ENCODE measurements at regions of chr11 and their contacts with region 1.

Region 1: DNA sequence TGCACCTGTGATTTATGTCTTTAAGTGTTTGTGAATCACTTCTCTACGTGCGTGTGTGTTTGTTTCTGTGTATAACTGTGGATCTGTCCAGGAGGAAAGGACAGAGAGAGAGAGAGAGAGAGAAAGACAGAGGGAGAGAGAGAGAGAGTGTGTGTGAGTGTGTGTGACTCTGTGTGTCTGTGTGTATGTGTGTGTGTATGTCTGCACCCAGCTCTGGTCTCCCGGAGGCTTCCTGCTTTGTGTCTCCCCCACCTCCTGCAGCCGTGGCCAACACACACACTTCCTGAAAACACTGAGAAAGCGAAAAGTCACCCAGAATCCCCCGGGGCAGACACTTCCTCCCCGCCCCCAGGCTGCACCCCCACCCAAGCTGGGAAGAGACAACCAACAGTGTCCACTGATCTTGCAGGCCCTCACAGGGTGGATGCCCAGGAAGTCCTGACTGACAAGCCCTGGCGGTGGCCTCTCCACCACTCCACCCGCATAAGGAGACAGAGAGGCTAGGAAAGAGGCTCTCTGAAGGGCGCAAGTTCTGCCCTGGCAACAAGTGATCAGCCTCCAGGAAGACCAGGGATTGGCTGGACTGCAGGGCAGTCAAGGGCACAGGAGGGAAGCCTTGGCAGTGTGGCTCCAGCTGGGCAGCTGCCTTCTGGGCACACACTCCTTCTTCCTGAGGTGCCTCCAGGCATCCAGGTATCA is 30.0 kb downstream of the ARAP1 start:
- DNase-seq: peak; percentile 78 to 88 (median 80)
- ATAC-seq: peak; percentile 92
- H3K4me3 ChIP-seq: peak overlapping the region; percentile 33
- H3K27ac ChIP-seq: peak overlapping the region; percentile 79
- H3K4me1 ChIP-seq: peaks cover 11 to 29% of the 10 kb centered on the region in 2 experiments; a peak in 4 of 5 replicates
- H3K27me3 ChIP-seq: no peaks in the 10 kb centered on the region
- CTCF ChIP-seq: no peak
- EP300 ChIP-seq: no peak
- POLR2A ChIP-seq: peak; percentile 68
- RAD21 ChIP-seq: no peak

Region 2: GRCh38 chr11:72598906-72599305 is 123.3 kb before region 1 on chr11:
- CTCF ChIA-PET with region 1: no interaction called
- POLR2A ChIA-PET with region 1: no interaction called
- in situ Hi-C with region 1: no loop called
- intact Hi-C with region 1: no loop called
- DNase-seq: peak; percentile 54 to 70 (median 60)
- ATAC-seq: peak; percentile 89
- H3K4me3 ChIP-seq: no peak overlapping the region
- H3K27ac ChIP-seq: no peak overlapping the region
- H3K4me1 ChIP-seq: no peaks in the 10 kb centered on the region
- H3K27me3 ChIP-seq: peaks cover 13 to 68% of the 10 kb centered on the region in 2 experiments; a peak in 4 of 5 replicates
- CTCF ChIP-seq: peak; percentile 62 to 70 (median 68)
- EP300 ChIP-seq: no peak
- POLR2A ChIP-seq: no peak
- RAD21 ChIP-seq: peak; percentile 41 to 76

Region 3: GRCh38 chr11:72625691-72626413 is 96.3 kb before region 1 on chr11:
- CTCF ChIA-PET with region 1: no interaction called
- POLR2A ChIA-PET with region 1: no interaction called
- in situ Hi-C with region 1: no loop called
- intact Hi-C with region 1: no loop called
- DNase-seq: peak; percentile 33 to 44 (median 40)
- ATAC-seq: peak; percentile 72
- H3K4me3 ChIP-seq: no peak overlapping the region
- H3K27ac ChIP-seq: no peak overlapping the region
- H3K4me1 ChIP-seq: peaks cover 18 to 21% of the 10 kb centered on the region in 2 experiments; a peak in 4 of 5 replicates
- H3K27me3 ChIP-seq: peaks cover 2 to 18% of the 10 kb centered on the region in 2 experiments; a peak in 4 of 5 replicates
- CTCF ChIP-seq: no peak
- EP300 ChIP-seq: no peak
- POLR2A ChIP-seq: no peak
- RAD21 ChIP-seq: no peak

Region 4: GRCh38 chr11:72676861-72677341 is 45.3 kb before region 1 on chr11:
- CTCF ChIA-PET with region 1: no interaction called
- POLR2A ChIA-PET with region 1: no interaction called
- in situ Hi-C with region 1: no loop called
- intact Hi-C with region 1: no loop called
- DNase-seq: peak; percentile 73 to 96 (median 90)
- ATAC-seq: peak; percentile 95
- H3K4me3 ChIP-seq: no peak overlapping the region
- H3K27ac ChIP-seq: no peak overlapping the region
- H3K4me1 ChIP-seq: peaks cover 0 to 20% of the 10 kb centered on the region in 2 experiments; a peak in 2 of 5 replicates
- H3K27me3 ChIP-seq: peaks cover 7 to 67% of the 10 kb centered on the region in 2 experiments; a peak in 4 of 5 replicates
- CTCF ChIP-seq: no peak
- EP300 ChIP-seq: no peak
- POLR2A ChIP-seq: no peak
- RAD21 ChIP-seq: no peak

Region 5: GRCh38 chr11:72752088-72752914 is 30.1 kb after region 1 on chr11 and contains the start of gene ARAP1:
- CTCF ChIA-PET with region 1: no interaction called
- POLR2A ChIA-PET with region 1: no interaction called
- in situ Hi-C with region 1: no loop called
- intact Hi-C with region 1: loop called (anchors 1 kb)
- DNase-seq: peak; percentile 85 to 98 (median 97)
- ATAC-seq: peak; percentile 91
- H3K4me3 ChIP-seq: peak within 1 kb of the TSS; percentile 97
- H3K27ac ChIP-seq: peak within 1 kb of the TSS; percentile 83
- H3K4me1 ChIP-seq: peaks cover 26 to 65% of the 10 kb centered on the region in 2 experiments
- H3K27me3 ChIP-seq: no peaks in the 10 kb centered on the region
- CTCF ChIP-seq: 0 out of 6 replicates have a peak, but pooled peaks of 2 of the 3 experiments have one; percentile 10 to 17
- EP300 ChIP-seq: no peak
- POLR2A ChIP-seq: peak; percentile 70
- RAD21 ChIP-seq: 0 out of 4 replicates have a peak, but pooled peaks of 1 of the 2 experiments have one; percentile 2
- polyA plus RNA-seq, gene ARAP1: 0.23 to 0.38 TPM

Region 6: GRCh38 chr11:72762641-72763304 is 40.6 kb after region 1 on chr11:
- CTCF ChIA-PET with region 1: no interaction called
- POLR2A ChIA-PET with region 1: no interaction called
- in situ Hi-C with region 1: no loop called
- intact Hi-C with region 1: no loop called
- DNase-seq: no peak
- ATAC-seq: no peak
- H3K4me3 ChIP-seq: no peak overlapping the region
- H3K27ac ChIP-seq: no peak overlapping the region
- H3K4me1 ChIP-seq: peaks cover 19 to 26% of the 10 kb centered on the region in 2 experiments
- H3K27me3 ChIP-seq: no peaks in the 10 kb centered on the region
- CTCF ChIP-seq: no peak
- EP300 ChIP-seq: no peak
- POLR2A ChIP-seq: no peak
- RAD21 ChIP-seq: no peak

Region 7: GRCh38 chr11:72814286-72815109 is 92.3 kb after region 1 on chr11 and contains the start of gene ATG16L2:
- CTCF ChIA-PET with region 1: interaction called, 20 read pairs
- POLR2A ChIA-PET with region 1: interaction called, 4 read pairs
- in situ Hi-C with region 1: no loop called
- intact Hi-C with region 1: loop called (anchors 5 kb)
- DNase-seq: peak; percentile 84 to 93 (median 92)
- ATAC-seq: peak; percentile 88
- H3K4me3 ChIP-seq: peak within 1 kb of the TSS; percentile 59
- H3K27ac ChIP-seq: peak within 1 kb of the TSS; percentile 87; the same call in 2 of the 3 replicates
- H3K4me1 ChIP-seq: peaks cover 33 to 42% of the 10 kb centered on the region in 2 experiments
- H3K27me3 ChIP-seq: no peaks in the 10 kb centered on the region
- CTCF ChIP-seq: peak in 2 of 3 experiments; percentile 36 to 66; a peak in 3 of 6 replicates
- EP300 ChIP-seq: no peak; the same call in 1 of the 2 replicates
- POLR2A ChIP-seq: no peak; the same call in 1 of the 2 replicates
- RAD21 ChIP-seq: peak; percentile 24 to 32; a peak in 3 of 4 replicates
- polyA plus RNA-seq, gene ATG16L2: 0.18 to 0.59 TPM

Region 8: GRCh38 chr11:73177778-73178577 is 455.8 kb after region 1 on chr11:
- CTCF ChIA-PET with region 1: no interaction called
- POLR2A ChIA-PET with region 1: no interaction called
- in situ Hi-C with region 1: loop called (anchors 10 kb)
- intact Hi-C with region 1: loop called (anchors 5 kb)
- DNase-seq: peak; percentile 68 to 76 (median 70)
- ATAC-seq: peak; percentile 89
- H3K4me3 ChIP-seq: no peak overlapping the region
- H3K27ac ChIP-seq: no peak overlapping the region
- H3K4me1 ChIP-seq: peaks cover 5 to 7% of the 10 kb centered on the region in 2 experiments; a peak in 3 of 5 replicates
- H3K27me3 ChIP-seq: no peaks in the 10 kb centered on the region
- CTCF ChIP-seq: peak; percentile 73 to 83 (median 81)
- EP300 ChIP-seq: no peak
- POLR2A ChIP-seq: no peak
- RAD21 ChIP-seq: peak; percentile 94 to 96

Region 9: DNA sequence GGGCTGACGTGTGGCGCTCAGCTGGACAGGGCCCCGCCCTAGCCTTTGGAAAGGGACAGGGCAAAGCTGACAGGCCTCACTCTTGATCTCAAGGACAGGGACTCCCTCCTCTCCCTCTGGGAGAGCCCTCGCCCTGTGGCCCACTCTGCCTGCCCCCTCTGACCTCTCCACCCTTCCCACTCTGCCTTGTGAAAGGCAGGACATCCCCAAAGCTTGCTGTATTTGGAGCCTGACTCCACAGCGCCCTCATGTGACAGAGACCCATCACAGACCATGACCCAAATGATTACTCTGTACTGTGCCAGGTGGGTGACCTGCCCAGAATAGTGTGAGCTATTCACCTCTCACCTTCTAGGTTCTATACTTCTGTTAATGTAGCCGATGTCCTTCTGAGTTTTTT is 514.7 kb after region 1 on chr11:
- CTCF ChIA-PET with region 1: interaction called, 3 read pairs
- POLR2A ChIA-PET with region 1: no interaction called
- in situ Hi-C with region 1: loop called (anchors 5 kb)
- intact Hi-C with region 1: no loop called
- DNase-seq: peak; percentile 54 to 71 (median 62)
- ATAC-seq: peak; percentile 88
- H3K4me3 ChIP-seq: no peak overlapping the region
- H3K27ac ChIP-seq: no peak overlapping the region
- H3K4me1 ChIP-seq: peaks cover 0 to 12% of the 10 kb centered on the region in 2 experiments; a peak in 2 of 5 replicates
- H3K27me3 ChIP-seq: peaks cover 6 to 58% of the 10 kb centered on the region in 2 experiments; a peak in 3 of 5 replicates
- CTCF ChIP-seq: peak; percentile 73 to 89 (median 77)
- EP300 ChIP-seq: no peak
- POLR2A ChIP-seq: no peak
- RAD21 ChIP-seq: peak in 1 of 2 experiments; percentile 74; a peak in 2 of 4 replicates